Heart right ventricle (tissue), 16 donors: ENCODE measurements at regions of chr15 and their contacts with region 1.

Region 1: DNA sequence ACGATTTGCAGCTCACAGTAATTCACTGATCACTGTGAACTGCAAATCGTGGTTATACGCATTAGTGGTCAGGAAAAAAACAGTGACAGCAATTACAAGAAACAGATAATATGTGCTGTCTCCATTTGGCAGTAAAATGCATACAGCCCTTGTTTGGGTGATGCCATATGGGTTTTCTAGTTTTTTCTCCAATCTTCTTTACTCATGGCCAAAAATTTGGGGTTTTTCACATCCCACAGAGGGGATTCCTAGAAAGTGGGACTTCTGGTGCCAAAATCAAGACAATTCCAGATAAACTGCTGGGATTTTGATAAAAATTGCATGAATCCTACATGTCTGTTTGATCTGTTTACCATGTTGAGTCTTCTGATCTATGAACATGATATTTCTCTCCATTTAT is 15.6 kb downstream of the NDN start:
- DNase-seq: no peak
- ATAC-seq: no peak
- H3K4me3 ChIP-seq: no peak overlapping the region
- H3K27ac ChIP-seq: no peak overlapping the region
- H3K4me1 ChIP-seq: no peaks in the 10 kb centered on the region
- H3K27me3 ChIP-seq: peaks cover 0 to 15% (median 0%) of the 10 kb centered on the region in 7 donors
- CTCF ChIP-seq: no peak

Region 2: GRCh38 chr15:23616536-23616935 is 54.9 kb before region 1 on chr15:
- intact Hi-C with region 1: loop called in 1 of 10 experiments (anchors 10 kb)
- DNase-seq: no peak
- ATAC-seq: no peak
- H3K4me3 ChIP-seq: no peak overlapping the region
- H3K27ac ChIP-seq: no peak overlapping the region
- H3K4me1 ChIP-seq: no peaks in the 10 kb centered on the region
- H3K27me3 ChIP-seq: no peaks in the 10 kb centered on the region
- CTCF ChIP-seq: no peak

Region 3: GRCh38 chr15:23797747-23798446 is 126.4 kb after region 1 on chr15:
- intact Hi-C with region 1: no loop called
- DNase-seq: no peak
- ATAC-seq: no peak
- H3K4me3 ChIP-seq: no peak overlapping the region
- H3K27ac ChIP-seq: no peak overlapping the region
- H3K4me1 ChIP-seq: no peaks in the 10 kb centered on the region
- H3K27me3 ChIP-seq: peaks cover 0 to 3% (median 0%) of the 10 kb centered on the region in 7 donors
- CTCF ChIP-seq: no peak